ENCODE measurements at regions of chr7 and their contacts with region 1.

Region 1: GRCh38 chr7:38660427-38661099 is 29.4 kb upstream of the AMPH start:
- DNase-seq: peak; percentile 49
- CTCF ChIP-seq: peak; percentile 86

Region 2: DNA sequence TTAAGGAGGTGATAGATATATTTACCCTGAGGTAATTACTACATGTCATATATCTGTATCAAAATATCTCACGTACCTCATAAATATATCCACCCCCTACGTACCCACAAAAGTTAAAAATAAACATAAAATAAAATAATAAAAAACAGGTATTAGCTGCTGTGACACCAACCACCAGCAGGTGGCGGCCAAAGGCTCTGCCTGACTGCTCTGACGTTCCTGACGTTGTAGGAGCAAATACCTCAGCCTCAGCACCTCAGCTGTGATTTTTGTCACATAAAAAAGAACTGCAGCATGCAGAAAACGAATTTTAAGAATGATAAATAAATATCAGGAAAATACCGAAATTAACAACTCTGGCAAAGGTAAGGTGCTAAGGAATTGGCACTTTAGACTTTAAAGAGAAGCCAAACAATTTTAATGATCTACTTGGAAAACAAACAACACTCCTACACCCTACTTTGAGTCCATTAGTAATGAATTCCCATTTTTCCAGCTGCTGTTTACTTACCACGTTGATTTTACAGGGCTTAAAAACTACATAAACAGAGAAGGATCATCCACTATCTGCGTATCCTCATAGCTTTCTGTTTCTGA is 261.7 kb before region 1 on chr7:
- CTCF ChIA-PET with region 1: interaction called, 50 read pairs
- POLR2A ChIA-PET with region 1: no interaction called
- DNase-seq: peak; percentile 53
- CTCF ChIP-seq: peak; percentile 88

Region 3: GRCh38 chr7:38673795-38674194 is 13.2 kb after region 1 on chr7:
- CTCF ChIA-PET with region 1: interaction called, 42 read pairs
- POLR2A ChIA-PET with region 1: no interaction called
- DNase-seq: no peak
- CTCF ChIP-seq: no peak

Region 4: DNA sequence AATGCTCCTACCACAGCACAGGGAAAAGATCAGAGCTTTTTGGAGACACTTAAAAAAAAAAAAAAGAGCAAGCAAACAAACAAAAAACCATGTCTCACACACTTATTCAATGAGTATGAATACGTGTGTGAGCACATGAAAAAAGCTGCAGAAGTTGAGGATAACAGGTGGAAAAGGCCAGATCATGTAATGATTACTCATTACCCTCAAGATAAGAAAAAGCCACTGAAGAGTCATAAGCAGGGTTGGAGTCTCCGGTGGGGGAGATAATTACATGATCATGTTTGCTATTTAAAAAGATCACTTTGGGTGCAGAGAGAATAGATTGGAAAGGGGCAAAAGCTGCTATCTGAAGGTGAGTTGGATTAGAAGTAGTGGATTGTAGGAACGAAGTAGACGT is 394.2 kb after region 1 on chr7:
- CTCF ChIA-PET with region 1: no interaction called
- POLR2A ChIA-PET with region 1: no interaction called
- DNase-seq: no peak
- CTCF ChIP-seq: no peak

Measured in GM10248 (cell line).